Cardiac septum (tissue), 1 donor: ENCODE measurements at regions of chr5 and their contacts with region 1.

Region 1: GRCh38 chr5:154654486-154655371 is 100.4 kb upstream of the LARP1 start:
- DNase-seq: no peak

Region 2: GRCh38 chr5:153816870-153817269 is 837.9 kb before region 1 on chr5:
- intact Hi-C with region 1: no loop called
- DNase-seq: no peak

Region 3: GRCh38 chr5:154701110-154701572 is 46.4 kb after region 1 on chr5:
- intact Hi-C with region 1: no loop called
- DNase-seq: no peak

Region 4: DNA sequence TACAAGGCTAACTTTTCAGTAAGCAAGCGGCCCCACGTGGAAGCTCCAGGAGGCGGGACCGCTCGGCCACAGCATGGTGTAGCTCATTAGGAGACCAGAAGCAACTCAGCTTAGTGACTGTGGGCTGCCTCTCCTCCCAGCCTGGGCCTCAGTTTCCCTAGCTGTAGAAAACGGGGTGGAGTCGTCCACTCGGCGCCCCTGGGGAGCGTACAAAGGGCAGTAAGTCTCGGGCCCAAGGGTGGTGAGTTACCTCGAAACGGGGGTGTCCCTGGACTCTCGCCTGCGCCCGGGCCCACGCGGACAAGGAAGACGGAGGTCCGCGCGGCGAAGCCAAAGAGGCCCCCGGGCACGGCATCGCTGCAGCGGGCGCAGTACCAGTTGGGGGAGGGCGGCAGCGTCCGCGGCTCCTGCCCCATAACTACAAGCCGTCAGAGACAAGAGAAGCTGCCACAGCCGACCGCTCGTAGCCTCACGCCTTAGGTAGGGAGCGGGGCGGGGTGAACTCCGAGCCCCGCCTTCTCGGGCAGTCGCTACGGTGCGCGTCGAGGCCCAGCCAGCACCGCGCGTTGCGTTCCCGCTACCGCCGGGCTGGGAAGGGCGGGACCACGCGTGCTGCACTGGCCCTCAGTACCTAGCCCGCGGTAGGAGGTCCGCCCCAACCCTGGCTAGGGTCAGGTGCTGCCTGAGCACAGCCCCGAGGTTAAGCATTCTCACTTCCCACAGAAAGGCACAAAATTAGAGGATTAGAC is 283.2 kb after region 1 on chr5 and contains the start of gene GEMIN5:
- intact Hi-C with region 1: loop called (anchors 10 kb)
- DNase-seq: peak; percentile 95
- total RNA-seq, gene GEMIN5: 14.2 TPM